ENCODE measurements at regions of chr5 and their contacts with region 1.

Region 1: GRCh38 chr5:67451640-67452279 is 255.2 kb upstream of the CD180 start:
- DNase-seq: no peak
- H3K4me3 ChIP-seq: no peak overlapping the region
- H3K27ac ChIP-seq: peak overlapping the region; percentile 64
- H3K4me1 ChIP-seq: peaks cover 52% of the 10 kb centered on the region
- H3K27me3 ChIP-seq: no peaks in the 10 kb centered on the region
- CTCF ChIP-seq: no peak

Region 2: GRCh38 chr5:68272289-68272688 is 820.5 kb after region 1 on chr5:
- CTCF ChIA-PET with region 1: no interaction called
- POLR2A ChIA-PET with region 1: no interaction called
- intact Hi-C with region 1: loop called (anchors 5 kb)
- DNase-seq: peak; percentile 54
- H3K4me3 ChIP-seq: no peak overlapping the region
- H3K27ac ChIP-seq: no peak overlapping the region
- H3K4me1 ChIP-seq: peaks cover 67% of the 10 kb centered on the region
- H3K27me3 ChIP-seq: no peaks in the 10 kb centered on the region
- CTCF ChIP-seq: peak; percentile 62

Region 3: DNA sequence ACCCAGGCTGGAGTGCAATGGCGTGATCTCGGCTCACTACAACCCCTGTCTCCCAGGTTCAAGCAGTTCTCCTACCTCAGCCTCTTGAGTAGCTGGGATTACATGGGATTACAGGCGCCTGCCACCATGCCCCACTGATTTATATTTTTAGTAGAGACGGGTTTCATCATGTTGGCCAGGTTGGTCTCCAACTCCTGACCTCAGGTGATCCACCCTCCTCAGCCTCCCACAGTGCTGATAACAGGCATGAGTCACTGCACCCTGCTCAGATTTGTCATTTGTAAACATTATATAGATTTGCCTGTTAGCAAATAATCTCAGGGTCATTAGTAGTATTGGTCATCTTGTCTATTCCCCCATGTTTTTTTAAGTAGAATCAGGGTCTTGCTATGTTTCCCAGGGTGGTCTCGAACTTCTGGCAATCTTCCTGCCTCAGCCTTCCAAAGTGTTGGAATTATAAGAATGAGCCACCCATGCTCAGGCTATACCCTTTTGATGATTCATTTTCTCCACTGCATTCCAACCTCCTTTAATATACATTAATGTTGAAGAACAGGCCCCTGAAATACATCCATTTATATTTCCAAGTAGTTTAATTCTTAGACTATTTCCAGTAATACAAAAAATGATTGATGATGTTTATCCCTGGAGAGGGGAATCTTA is 1754.9 kb after region 1 on chr5:
- CTCF ChIA-PET with region 1: no interaction called
- POLR2A ChIA-PET with region 1: interaction called, 14 read pairs
- intact Hi-C with region 1: no loop called
- DNase-seq: no peak
- H3K4me3 ChIP-seq: no peak overlapping the region
- H3K27ac ChIP-seq: no peak overlapping the region
- H3K4me1 ChIP-seq: no peaks in the 10 kb centered on the region
- H3K27me3 ChIP-seq: no peaks in the 10 kb centered on the region
- CTCF ChIP-seq: no peak

Measured in A673 (cell line).